Heart right ventricle (tissue), 16 donors: ENCODE measurements at regions of chr16 and their contacts with region 1.

Region 1: GRCh38 chr16:30091474-30092372 is at the start of gene TBX6:
- DNase-seq: peak; percentile 92 to 95
- ATAC-seq: peak; percentile 90 to 94 (median 92)
- H3K4me3 ChIP-seq: peak within 1 kb of the TSS; percentile 39 to 65 (median 56)
- H3K27ac ChIP-seq: peak within 1 kb of the TSS; percentile 39 to 95 (median 88)
- H3K4me1 ChIP-seq: peaks cover 7 to 78% (median 45%) of the 10 kb centered on the region in 9 donors
- H3K27me3 ChIP-seq: no peaks in the 10 kb centered on the region
- CTCF ChIP-seq: peak; percentile 68 to 95 (median 79)
- total RNA-seq, gene TBX6: 0.28 to 1.4 (median 0.57) TPM

Region 2: DNA sequence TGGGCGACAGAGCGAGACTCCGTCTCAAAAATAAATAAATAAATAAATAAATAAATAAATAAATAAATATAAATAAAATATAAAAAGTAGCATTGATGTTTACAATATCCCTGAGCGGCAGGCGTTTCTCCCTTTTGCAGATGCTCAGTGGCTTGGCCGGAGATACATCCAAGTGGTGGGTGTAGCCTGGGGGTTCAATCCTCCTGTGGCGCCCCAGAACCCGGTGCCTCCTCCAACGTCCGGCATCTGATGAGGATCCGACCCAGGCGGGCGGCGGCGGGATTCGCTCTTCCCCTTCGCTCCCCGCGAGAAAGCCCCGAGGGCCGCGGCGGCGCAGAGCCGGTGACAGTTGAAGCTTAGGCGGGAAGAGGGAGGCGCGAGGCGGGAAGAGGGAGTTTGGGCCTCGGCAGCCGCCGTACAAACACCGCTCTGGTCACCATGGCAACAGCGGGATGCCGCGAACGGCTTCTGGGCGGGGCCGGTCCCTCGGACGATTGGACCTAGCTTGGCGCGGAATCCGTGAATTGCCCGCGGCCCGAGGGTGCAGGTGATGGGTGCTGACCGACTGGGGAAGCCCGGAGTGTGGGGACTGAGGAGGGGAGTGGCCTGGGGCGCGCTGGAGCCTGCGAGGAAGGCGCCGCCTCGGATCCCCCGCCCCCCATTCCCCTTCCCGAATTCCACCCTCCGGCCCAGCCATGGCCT is 38.9 kb before region 1 on chr16:
- intact Hi-C with region 1: loop called in 3 of 10 experiments (anchors 2 to 5 kb)
- DNase-seq: peak; percentile 94 to 96
- ATAC-seq: peak; percentile 91 to 97 (median 96)
- H3K4me3 ChIP-seq: peak overlapping the region; percentile 37 to 87 (median 78)
- H3K27ac ChIP-seq: peak overlapping the region in 5 of 10 donors; percentile 29 to 80 (median 51)
- H3K4me1 ChIP-seq: peaks cover 4 to 24% (median 9%) of the 10 kb centered on the region in 9 donors
- H3K27me3 ChIP-seq: no peaks in the 10 kb centered on the region
- CTCF ChIP-seq: no peak

Region 3: DNA sequence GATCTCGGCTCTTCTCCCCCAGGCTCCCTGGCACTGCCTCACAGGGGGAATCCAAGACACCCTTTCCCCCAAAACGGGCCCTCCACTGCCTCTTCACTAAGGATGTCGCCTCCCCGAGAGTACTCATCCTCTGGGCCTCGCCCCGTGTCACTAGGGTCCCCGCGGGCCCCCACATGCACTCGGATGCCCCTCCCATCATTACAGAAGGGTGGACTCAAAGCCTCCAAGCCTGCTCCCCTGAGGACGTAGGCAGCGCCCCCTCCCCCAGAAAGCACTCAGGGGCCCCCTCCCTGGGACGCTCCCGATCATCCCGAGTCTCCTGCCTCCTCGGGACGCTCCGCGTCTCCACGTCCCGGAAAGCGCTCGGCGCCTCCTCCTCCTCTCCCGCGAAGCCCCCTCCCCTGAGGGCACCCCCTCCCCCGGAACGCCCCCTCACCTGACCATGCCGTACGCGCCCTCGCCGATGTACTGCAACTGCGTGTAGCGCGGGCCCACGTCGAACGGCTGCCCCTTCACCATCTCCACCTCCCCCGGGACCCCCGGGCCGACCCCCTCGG is 31.0 kb after region 1 on chr16:
- intact Hi-C with region 1: loop called in 1 of 10 experiments (anchors 2 kb)
- DNase-seq: no peak
- ATAC-seq: peak; percentile 4 to 53 (median 33)
- H3K4me3 ChIP-seq: peak overlapping the region; percentile 74 to 98 (median 88)
- H3K27ac ChIP-seq: peak overlapping the region; percentile 94 to 99 (median 97)
- H3K4me1 ChIP-seq: peaks cover 2 to 48% (median 26%) of the 10 kb centered on the region in 9 donors
- H3K27me3 ChIP-seq: no peaks in the 10 kb centered on the region
- CTCF ChIP-seq: no peak

Region 4: DNA sequence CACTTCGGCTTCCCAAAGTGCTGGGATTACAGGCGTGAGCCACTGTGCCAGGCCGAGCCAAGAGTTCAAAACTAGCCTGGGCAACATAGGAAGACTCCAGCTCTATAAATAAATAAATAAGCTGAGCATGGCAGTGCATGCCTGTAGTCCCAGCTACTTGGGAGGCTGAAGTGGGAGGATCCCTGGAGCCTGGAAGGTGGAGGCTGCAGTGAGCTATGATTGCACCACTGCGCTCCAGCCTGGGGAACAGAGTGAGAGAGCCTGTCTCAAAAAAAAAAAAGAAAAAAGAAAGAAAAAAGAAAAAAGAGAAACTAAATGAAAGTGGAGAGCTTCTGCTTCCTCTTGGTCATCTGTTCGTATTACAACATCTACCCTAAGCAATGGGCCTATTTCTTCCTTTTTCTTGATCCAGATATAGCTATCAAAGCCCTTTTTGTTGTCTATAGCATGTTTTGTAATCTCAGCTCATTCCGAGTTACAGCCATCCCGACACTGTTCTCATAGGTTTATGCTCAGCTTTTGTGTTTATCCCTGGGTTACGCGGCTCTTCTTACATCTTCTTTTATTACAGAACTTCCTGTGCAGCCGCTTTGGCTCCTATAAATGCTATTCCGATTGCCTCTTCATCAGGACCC is 45.4 kb after region 1 on chr16:
- intact Hi-C with region 1: no loop called
- DNase-seq: no peak
- ATAC-seq: peak in 5 of 8 donors; percentile 7 to 55 (median 38)
- H3K4me3 ChIP-seq: no peak overlapping the region
- H3K27ac ChIP-seq: peak overlapping the region in 1 of 10 donors; percentile 70
- H3K4me1 ChIP-seq: peaks cover 0 to 37% (median 0%) of the 10 kb centered on the region in 9 donors
- H3K27me3 ChIP-seq: no peaks in the 10 kb centered on the region
- CTCF ChIP-seq: no peak